ENCODE measurements at regions of chr7 and their contacts with region 1.

Region 1: GRCh38 chr7:94087664-94088352 is 83.7 kb upstream of the BET1 start:
- DNase-seq: no peak
- ATAC-seq: peak in 2 of 4 donors; percentile 53 to 67
- H3K4me3 ChIP-seq: peak overlapping the region; percentile 45
- H3K27ac ChIP-seq: no peak overlapping the region
- H3K4me1 ChIP-seq: no peaks in the 10 kb centered on the region
- H3K27me3 ChIP-seq: no peaks in the 10 kb centered on the region
- CTCF ChIP-seq: peak; percentile 68

Region 2: GRCh38 chr7:93245525-93246432 is 842.0 kb before region 1 on chr7:
- intact Hi-C with region 1: loop called in 1 of 2 experiments (anchors 10 kb)
- DNase-seq: no peak
- ATAC-seq: peak in 2 of 4 donors; percentile 30 to 40
- H3K4me3 ChIP-seq: no peak overlapping the region
- H3K27ac ChIP-seq: no peak overlapping the region
- H3K4me1 ChIP-seq: no peaks in the 10 kb centered on the region
- H3K27me3 ChIP-seq: no peaks in the 10 kb centered on the region
- CTCF ChIP-seq: peak; percentile 61

Region 3: DNA sequence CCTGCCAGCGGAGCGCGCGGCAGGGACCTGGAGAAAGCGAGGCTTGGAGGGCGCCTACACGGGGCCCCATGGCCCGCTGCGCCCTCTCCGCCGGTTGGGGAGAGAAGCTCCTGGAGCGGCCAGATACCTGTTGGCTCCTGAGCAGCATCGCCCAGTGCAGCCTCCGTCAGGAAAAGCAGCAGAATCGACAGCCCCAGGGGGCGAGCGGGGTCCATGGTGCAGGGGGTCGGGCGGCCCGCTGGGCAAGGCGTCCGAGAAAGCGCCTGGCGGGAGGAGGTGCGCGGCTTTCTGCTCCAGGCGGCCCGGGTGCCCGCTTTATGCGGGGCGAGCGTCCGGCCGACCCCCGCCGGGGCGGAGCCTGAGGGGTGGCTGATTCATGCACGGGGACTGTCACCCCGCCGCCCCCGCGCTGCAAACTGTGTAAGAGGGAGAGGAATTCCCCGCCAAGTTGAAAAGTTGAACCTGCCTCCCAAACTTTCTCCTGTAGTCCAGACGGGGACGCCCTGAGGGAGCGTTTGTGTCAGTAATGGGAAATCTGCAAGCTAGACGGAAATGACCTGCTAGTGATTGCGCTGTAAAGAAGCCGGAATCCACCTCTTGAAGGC is 197.2 kb before region 1 on chr7 and contains the start of gene TFPI2:
- intact Hi-C with region 1: loop called in 1 of 2 experiments (anchors 10 kb)
- DNase-seq: peak in 1 of 2 donors; percentile 38
- ATAC-seq: peak in 2 of 4 donors; percentile 33 to 35
- H3K4me3 ChIP-seq: peak within 1 kb of the TSS; percentile 62
- H3K27ac ChIP-seq: no peak within 1 kb of the TSS
- H3K4me1 ChIP-seq: no peaks in the 10 kb centered on the region
- H3K27me3 ChIP-seq: peaks cover 0 to 14% (median 0%) of the 10 kb centered on the region in 3 donors
- CTCF ChIP-seq: no peak
- total RNA-seq, gene TFPI2: 0.79 to 7.5 (median 2.4) TPM

Region 4: GRCh38 chr7:93906265-93906664 is 181.5 kb before region 1 on chr7 and contains the start of gene GNGT1:
- intact Hi-C with region 1: loop called in 1 of 2 experiments (anchors 5 kb)
- DNase-seq: no peak
- ATAC-seq: no peak
- H3K4me3 ChIP-seq: no peak within 1 kb of the TSS
- H3K27ac ChIP-seq: no peak within 1 kb of the TSS
- H3K4me1 ChIP-seq: peaks cover 6% of the 10 kb centered on the region
- H3K27me3 ChIP-seq: no peaks in the 10 kb centered on the region
- CTCF ChIP-seq: no peak
- total RNA-seq, gene GNGT1: not detected

Measured in psoas muscle (tissue), 8 donors.